CD8-positive, alpha-beta T cell (primary cell): ENCODE measurements at regions of chr5 and their contacts with region 1.

Region 1: GRCh38 chr5:95519151-95519550 is 35.6 kb downstream of the SKIC3 start:
- DNase-seq: no peak
- ATAC-seq: no peak
- H3K4me3 ChIP-seq: no peak overlapping the region
- H3K4me3 Mint-ChIP-seq: no peak overlapping the region
- H3K27ac ChIP-seq: no peak overlapping the region
- H3K27ac Mint-ChIP-seq: no peak overlapping the region
- H3K4me1 ChIP-seq: no peaks in the 10 kb centered on the region
- H3K4me1 Mint-ChIP-seq: no peaks in the 10 kb centered on the region
- H3K27me3 ChIP-seq: no peaks in the 10 kb centered on the region
- H3K27me3 Mint-ChIP-seq: no peaks in the 10 kb centered on the region
- CTCF ChIP-seq: no peak

Region 2: DNA sequence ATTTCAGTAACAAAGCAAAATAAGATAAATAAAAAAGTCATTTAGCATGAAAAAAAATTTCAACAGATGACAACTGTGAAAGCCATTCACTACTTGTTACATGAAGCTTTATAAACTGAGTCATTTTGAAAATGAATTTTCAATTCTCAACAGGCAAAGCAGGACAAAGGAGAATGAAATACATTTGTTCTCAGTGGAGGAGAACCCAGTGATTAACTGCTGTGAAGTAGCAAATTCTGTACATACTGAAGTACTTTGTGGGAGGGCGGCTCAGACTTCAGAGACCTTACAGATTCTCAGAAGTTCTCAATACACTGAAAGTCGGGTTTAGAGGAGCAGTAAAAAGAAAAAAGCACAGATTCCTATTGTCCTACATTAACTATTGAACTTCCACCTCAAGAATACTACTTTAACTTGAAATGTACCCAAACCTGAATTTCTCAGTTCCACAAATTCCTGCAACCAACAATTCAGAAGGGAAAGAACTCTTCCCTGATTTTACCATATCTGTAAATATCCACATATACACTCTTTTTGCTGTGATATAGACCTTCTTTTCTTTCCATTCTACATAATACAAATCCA is 14.0 kb after region 1 on chr5:
- CTCF ChIA-PET with region 1: no interaction called
- POLR2A ChIA-PET with region 1: no interaction called
- intact Hi-C with region 1: loop called in 1 of 2 experiments (anchors 2 kb)
- DNase-seq: no peak
- ATAC-seq: no peak
- H3K4me3 ChIP-seq: no peak overlapping the region
- H3K4me3 Mint-ChIP-seq: no peak overlapping the region
- H3K27ac ChIP-seq: no peak overlapping the region
- H3K27ac Mint-ChIP-seq: peak overlapping the region; percentile 20
- H3K4me1 ChIP-seq: no peaks in the 10 kb centered on the region
- H3K4me1 Mint-ChIP-seq: peaks cover 8% of the 10 kb centered on the region
- H3K27me3 ChIP-seq: no peaks in the 10 kb centered on the region
- H3K27me3 Mint-ChIP-seq: no peaks in the 10 kb centered on the region
- CTCF ChIP-seq: no peak